Right cardiac atrium (tissue), 5 donors: ENCODE measurements at regions of chr15 and their contacts with region 1.

Region 1: DNA sequence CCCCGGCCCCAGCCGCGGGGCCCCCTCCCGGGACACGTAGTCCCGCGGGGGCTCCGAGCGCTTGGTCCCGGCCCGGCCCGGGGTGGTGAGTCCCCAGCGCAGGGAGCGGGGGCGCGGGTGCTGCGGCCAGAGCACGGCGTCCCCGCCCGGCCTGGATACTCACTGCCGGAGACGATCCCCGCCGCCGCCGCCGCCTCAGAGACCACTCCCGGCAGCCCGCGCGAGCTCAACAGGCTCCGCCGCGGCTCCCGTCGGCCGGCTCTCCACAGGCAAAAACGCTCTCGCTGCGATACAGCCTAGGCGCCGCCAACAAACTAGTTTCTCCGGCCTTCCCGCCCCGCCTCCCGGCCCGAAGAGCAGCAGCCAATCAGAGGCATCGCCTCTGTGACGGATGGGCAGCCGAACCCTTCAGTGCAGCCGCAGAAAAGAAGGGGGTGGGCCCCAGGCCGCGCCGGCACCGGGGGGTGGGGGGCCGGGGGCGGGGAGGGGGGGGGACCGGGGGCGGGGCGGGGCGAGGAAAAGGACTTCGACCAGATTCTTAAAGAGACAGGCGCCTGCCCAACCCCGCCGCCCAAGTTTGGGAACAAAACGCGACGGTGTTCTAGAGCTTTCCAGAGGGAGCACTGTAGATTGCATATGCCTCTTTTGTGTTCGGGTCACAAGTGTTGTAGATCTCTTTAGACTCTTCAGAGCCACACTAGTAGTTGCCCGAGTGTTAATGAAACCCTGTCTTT is at the start of gene KLHL25:
- DNase-seq: peak; percentile 96 to 98 (median 97)
- ATAC-seq: peak; percentile 97 to 98
- H3K4me3 ChIP-seq: peak within 1 kb of the TSS; percentile 97
- H3K27ac ChIP-seq: peak within 1 kb of the TSS; percentile 79
- H3K4me1 ChIP-seq: peaks cover 8% of the 10 kb centered on the region
- H3K27me3 ChIP-seq: no peaks in the 10 kb centered on the region
- total RNA-seq, gene KLHL25: 3.4 to 6.6 (median 5.3) TPM

Region 2: GRCh38 chr15:85742186-85742821 is 52.5 kb before region 1 on chr15:
- intact Hi-C with region 1: loop called in 2 of 4 experiments (anchors 10 kb)
- DNase-seq: no peak
- ATAC-seq: peak; percentile 20 to 25
- H3K4me3 ChIP-seq: no peak overlapping the region
- H3K27ac ChIP-seq: peak overlapping the region; percentile 17
- H3K4me1 ChIP-seq: no peaks in the 10 kb centered on the region
- H3K27me3 ChIP-seq: no peaks in the 10 kb centered on the region

Region 3: DNA sequence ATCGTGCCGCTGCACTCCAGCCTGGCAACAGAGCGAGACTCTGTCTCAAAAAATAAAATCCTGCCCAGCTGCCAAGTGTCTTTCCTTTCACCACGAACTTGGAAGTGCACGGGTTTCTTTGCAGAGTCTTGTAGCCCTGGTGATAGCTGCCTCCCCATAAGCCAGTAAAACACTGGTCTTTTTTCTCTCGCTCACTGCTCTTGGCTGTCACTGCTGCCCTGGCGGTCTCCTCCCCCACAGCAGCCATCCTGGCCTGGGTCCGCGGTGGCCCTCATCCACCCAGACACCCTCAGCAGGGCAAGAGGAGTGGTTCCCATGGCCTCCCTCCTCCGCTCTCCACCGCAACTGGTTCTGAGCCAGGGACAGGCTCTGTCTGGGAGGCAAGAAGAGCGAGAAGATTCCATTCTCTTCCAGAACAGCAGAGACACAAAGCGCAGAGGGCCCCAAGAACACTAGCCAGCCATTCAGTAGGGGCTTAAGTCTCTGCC is 44.4 kb before region 1 on chr15:
- intact Hi-C with region 1: loop called in 3 of 4 experiments (anchors 5 to 10 kb)
- DNase-seq: peak; percentile 91 to 95 (median 95)
- ATAC-seq: peak; percentile 75 to 82
- H3K4me3 ChIP-seq: no peak overlapping the region
- H3K27ac ChIP-seq: peak overlapping the region; percentile 21
- H3K4me1 ChIP-seq: peaks cover 12% of the 10 kb centered on the region
- H3K27me3 ChIP-seq: no peaks in the 10 kb centered on the region